ENCODE measurements at regions of chr12 and their contacts with region 1.

Region 1: GRCh38 chr12:103503977-103504376 is 8.2 kb upstream of the C12orf42 start:
- DNase-seq: peak; percentile 69
- H3K4me3 Mint-ChIP-seq: no peak overlapping the region
- H3K27ac Mint-ChIP-seq: no peak overlapping the region
- H3K4me1 Mint-ChIP-seq: peaks cover 22% of the 10 kb centered on the region
- H3K27me3 Mint-ChIP-seq: peaks cover 3% of the 10 kb centered on the region

Region 2: DNA sequence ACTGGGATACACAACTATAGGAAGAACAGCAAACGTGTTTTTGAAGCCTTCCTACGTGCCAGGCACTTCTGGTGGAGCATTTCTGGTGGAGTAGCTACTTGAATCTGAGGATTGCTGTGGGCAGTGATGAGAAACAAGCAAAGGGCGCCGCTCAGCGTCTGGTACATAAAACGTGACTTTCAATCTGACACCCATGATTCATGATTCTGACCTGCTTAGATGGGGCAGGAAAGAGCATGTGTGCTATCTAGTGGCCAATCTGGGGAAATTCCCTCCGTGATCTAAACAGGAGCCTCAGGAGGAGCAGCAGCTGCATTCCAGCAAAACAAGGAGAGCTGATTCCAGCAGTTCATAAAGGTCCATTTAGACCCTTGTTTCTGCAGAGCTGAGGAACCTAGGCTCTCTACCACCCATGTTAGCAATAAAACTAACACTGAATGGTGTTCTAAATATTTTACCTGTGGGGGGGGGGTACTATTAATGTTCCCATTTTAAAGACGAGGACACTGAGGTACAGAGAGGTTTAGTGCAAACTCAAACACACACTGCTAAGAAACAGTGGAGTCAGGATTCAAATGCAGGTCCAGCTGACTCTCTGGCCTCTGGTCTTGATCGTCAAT is 624.7 kb before region 1 on chr12:
- CTCF ChIA-PET with region 1: no interaction called
- intact Hi-C with region 1: loop called (anchors 2 kb)
- DNase-seq: peak; percentile 51
- H3K4me3 Mint-ChIP-seq: no peak overlapping the region
- H3K27ac Mint-ChIP-seq: no peak overlapping the region
- H3K4me1 Mint-ChIP-seq: no peaks in the 10 kb centered on the region
- H3K27me3 Mint-ChIP-seq: peaks cover 13% of the 10 kb centered on the region

Region 3: DNA sequence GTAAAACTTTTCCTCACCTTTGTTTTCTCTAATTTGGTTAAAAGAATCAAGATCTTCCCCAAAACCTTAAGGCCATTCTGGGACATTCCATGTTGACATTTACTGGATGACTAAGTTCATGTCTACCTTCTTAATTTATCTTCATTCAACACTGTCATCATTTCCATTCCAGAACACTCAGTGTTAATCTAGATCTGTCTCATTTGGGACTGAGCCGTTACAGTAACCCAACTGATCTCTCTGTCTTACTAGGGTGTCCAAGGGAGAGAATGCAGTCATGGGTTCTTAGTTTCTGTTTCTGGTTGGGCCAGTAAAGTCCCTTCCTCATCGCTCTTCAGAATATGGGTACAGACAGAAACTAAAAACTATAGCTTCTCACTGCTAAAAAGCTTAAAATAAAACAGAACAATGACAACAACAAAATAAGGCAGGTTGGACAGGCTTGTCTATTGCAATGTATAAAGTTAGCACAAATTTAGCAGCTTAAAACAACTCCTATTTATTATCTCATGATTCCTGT is 401.7 kb before region 1 on chr12:
- CTCF ChIA-PET with region 1: no interaction called
- intact Hi-C with region 1: loop called (anchors 1 kb)
- DNase-seq: no peak
- H3K4me3 Mint-ChIP-seq: no peak overlapping the region
- H3K27ac Mint-ChIP-seq: no peak overlapping the region
- H3K4me1 Mint-ChIP-seq: no peaks in the 10 kb centered on the region
- H3K27me3 Mint-ChIP-seq: no peaks in the 10 kb centered on the region

Region 4: GRCh38 chr12:103326190-103326589 is 177.8 kb before region 1 on chr12:
- CTCF ChIA-PET with region 1: no interaction called
- intact Hi-C with region 1: loop called (anchors 5 kb)
- DNase-seq: no peak
- H3K4me3 Mint-ChIP-seq: no peak overlapping the region
- H3K27ac Mint-ChIP-seq: no peak overlapping the region
- H3K4me1 Mint-ChIP-seq: no peaks in the 10 kb centered on the region
- H3K27me3 Mint-ChIP-seq: no peaks in the 10 kb centered on the region